ENCODE measurements at regions of chr6 and their contacts with region 1.

Region 1: DNA sequence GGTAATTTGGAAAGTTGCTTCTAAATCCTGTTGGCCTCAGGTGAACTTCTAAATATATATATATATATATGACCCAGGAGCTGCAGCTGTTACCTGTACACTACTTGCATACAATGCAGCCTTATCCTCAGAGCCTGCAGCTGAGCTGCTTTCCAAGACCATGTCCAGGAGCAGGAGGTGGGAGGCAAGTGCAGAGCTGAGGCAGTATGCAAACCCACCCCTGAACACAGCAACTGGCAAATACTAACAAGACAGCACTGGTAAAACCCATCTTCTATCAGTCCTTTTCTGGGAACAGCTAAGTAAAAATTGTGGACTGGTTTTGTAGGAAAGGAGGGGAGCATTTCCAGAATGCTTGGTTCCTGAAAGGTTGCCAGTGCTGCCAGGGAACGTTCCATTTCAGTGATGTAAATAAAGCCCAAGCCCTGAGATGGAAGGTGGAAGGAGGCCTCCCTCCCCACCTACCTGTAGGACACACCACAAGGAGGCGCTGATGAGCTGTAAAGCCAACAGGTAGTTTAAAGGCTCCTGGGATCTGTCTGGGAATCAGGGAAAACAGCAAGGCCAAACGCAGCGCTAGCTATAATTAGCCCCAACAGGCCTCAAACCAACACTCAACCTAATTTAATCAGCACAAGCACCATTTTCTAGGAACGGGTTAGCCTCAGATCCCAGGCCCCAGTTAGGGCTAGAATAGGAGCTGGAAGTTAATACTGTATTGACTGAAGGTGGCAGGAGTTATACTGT is 93.8 kb upstream of the MAP7 start:
- DNase-seq: peak; percentile 86 to 91 (median 90)
- ATAC-seq: peak; percentile 95 to 98 (median 96)
- H3K4me3 ChIP-seq: no peak overlapping the region
- H3K27ac ChIP-seq: no peak overlapping the region
- H3K4me1 ChIP-seq: peaks cover 0 to 23% (median 2%) of the 10 kb centered on the region in 4 donors
- H3K27me3 ChIP-seq: no peaks in the 10 kb centered on the region
- CTCF ChIP-seq: peak; percentile 79 to 95 (median 91)
- POLR2A ChIP-seq: no peak

Region 2: DNA sequence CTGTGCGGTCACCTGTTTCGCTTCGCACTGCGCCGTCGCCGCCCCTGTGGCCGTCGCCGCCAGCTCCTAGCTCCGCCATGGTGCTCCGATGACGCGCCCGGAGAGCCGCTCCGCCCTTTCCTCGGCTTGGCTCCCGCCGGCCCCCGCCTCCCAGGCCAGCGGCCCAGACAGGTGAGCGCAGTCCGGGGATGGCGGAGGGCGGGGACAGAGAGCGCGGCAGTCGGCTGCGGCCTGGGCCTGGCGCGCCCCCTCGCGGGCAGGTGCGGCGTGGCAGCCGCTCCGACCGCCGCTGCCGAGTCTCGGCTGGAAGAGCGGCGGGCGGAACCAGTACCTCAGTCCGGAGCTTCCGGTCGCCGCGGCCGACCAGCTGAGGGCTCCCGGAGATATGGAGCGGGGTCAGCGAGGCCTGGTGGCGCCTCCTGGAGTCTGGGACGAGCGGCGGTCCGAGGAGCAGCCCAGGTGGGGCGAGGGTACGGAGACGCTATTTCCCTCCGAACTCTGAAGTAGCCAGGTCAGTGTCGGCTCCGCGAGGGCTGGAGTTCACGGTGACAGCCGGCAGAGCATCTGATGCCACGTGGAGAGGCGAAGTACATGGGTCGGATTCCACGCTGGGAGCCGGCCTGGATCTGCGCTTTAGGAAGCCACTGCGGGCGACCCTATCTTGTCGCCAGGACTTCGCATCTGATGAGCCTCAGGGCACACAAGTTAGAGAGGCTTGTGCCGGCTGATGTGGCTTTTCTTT is 93.5 kb before region 1 on chr6 and contains the start of gene MAP7:
- intact Hi-C with region 1: no loop called
- DNase-seq: peak; percentile 91 to 94 (median 93)
- ATAC-seq: peak; percentile 93 to 97 (median 95)
- H3K4me3 ChIP-seq: peak within 1 kb of the TSS; percentile 74 to 91 (median 75)
- H3K27ac ChIP-seq: peak within 1 kb of the TSS; percentile 65 to 92 (median 86)
- H3K4me1 ChIP-seq: peaks cover 0 to 20% (median 8%) of the 10 kb centered on the region in 4 donors
- H3K27me3 ChIP-seq: no peaks in the 10 kb centered on the region
- CTCF ChIP-seq: peak; percentile 95 to 100 (median 98)
- POLR2A ChIP-seq: peak; percentile 70
- total RNA-seq, gene MAP7: 14.8 to 20.9 (median 17.9) TPM

Region 3: GRCh38 chr6:136792410-136793262 is 148.6 kb after region 1 on chr6 and contains the start of gene MAP3K5:
- intact Hi-C with region 1: loop called (anchors 10 kb)
- DNase-seq: peak; percentile 94 to 95 (median 94)
- ATAC-seq: peak; percentile 85 to 91 (median 86)
- H3K4me3 ChIP-seq: peak within 1 kb of the TSS; percentile 90 to 96 (median 95)
- H3K27ac ChIP-seq: peak within 1 kb of the TSS; percentile 93 to 95 (median 93)
- H3K4me1 ChIP-seq: peaks cover 0 to 26% (median 9%) of the 10 kb centered on the region in 4 donors
- H3K27me3 ChIP-seq: no peaks in the 10 kb centered on the region
- CTCF ChIP-seq: peak; percentile 73 to 85 (median 80)
- POLR2A ChIP-seq: peak; percentile 16
- total RNA-seq, gene MAP3K5: 5.0 to 10.4 (median 6.9) TPM

Region 4: DNA sequence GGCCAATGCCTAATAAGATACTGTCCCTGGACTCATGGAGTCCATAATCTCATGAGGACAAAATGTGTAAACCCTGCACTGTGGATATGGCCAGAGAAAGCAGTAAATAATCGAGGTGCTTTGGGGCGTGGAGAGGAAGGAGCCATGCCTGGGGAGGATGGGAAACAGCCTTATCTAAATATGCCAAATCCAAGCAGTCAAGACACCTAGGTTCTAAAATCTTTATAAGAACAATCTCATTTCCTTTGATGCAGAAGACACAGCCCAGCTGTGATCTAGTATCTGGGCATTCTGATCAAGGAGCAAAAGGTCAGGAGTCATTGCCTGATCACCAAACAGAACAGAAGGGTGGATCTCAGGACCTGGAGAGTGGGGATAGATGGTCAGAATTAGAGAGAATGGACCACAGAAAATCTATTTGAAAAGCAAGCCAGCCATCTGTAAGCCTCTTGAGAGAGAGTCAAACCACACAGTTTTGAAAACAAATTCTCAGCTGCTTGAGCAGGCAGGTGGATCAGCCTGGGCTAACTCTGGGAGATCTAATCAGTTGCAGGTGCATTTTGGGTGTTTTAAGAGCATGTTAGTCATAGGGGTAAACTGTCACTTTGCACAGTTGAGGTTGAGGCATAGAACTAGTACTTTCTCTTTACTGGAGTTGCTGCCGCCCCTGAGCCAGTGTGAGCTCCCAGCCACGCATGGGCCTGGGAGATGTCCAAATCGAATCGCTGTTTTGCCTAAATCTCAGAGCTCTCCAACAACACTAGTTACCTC is 1092.2 kb after region 1 on chr6:
- intact Hi-C with region 1: no loop called
- DNase-seq: no peak
- ATAC-seq: no peak
- H3K4me3 ChIP-seq: no peak overlapping the region
- H3K27ac ChIP-seq: no peak overlapping the region
- H3K4me1 ChIP-seq: peaks cover 0 to 6% (median 1%) of the 10 kb centered on the region in 4 donors
- H3K27me3 ChIP-seq: no peaks in the 10 kb centered on the region
- CTCF ChIP-seq: no peak
- POLR2A ChIP-seq: no peak